Heart right ventricle (tissue), 16 donors: ENCODE measurements at regions of chr18 and their contacts with region 1.

Region 1: GRCh38 chr18:69330370-69331005 is 70.2 kb upstream of the DOK6 start:
- DNase-seq: no peak
- ATAC-seq: no peak
- H3K4me3 ChIP-seq: no peak overlapping the region
- H3K27ac ChIP-seq: no peak overlapping the region
- H3K4me1 ChIP-seq: no peaks in the 10 kb centered on the region
- H3K27me3 ChIP-seq: no peaks in the 10 kb centered on the region
- CTCF ChIP-seq: no peak

Region 2: GRCh38 chr18:68275616-68276015 is 1054.9 kb before region 1 on chr18:
- intact Hi-C with region 1: no loop called
- DNase-seq: no peak
- ATAC-seq: no peak
- H3K4me3 ChIP-seq: no peak overlapping the region
- H3K27ac ChIP-seq: no peak overlapping the region
- H3K4me1 ChIP-seq: no peaks in the 10 kb centered on the region
- H3K27me3 ChIP-seq: no peaks in the 10 kb centered on the region
- CTCF ChIP-seq: no peak

Region 3: GRCh38 chr18:69220529-69220928 is 110.0 kb before region 1 on chr18:
- intact Hi-C with region 1: no loop called
- DNase-seq: no peak
- ATAC-seq: no peak
- H3K4me3 ChIP-seq: no peak overlapping the region
- H3K27ac ChIP-seq: no peak overlapping the region
- H3K4me1 ChIP-seq: no peaks in the 10 kb centered on the region
- H3K27me3 ChIP-seq: no peaks in the 10 kb centered on the region
- CTCF ChIP-seq: no peak

Region 4: GRCh38 chr18:69265656-69266055 is 64.8 kb before region 1 on chr18:
- intact Hi-C with region 1: loop called in 1 of 10 experiments (anchors 10 kb)
- DNase-seq: no peak
- ATAC-seq: no peak
- H3K4me3 ChIP-seq: no peak overlapping the region
- H3K27ac ChIP-seq: no peak overlapping the region
- H3K4me1 ChIP-seq: no peaks in the 10 kb centered on the region
- H3K27me3 ChIP-seq: no peaks in the 10 kb centered on the region
- CTCF ChIP-seq: no peak